ENCODE measurements at regions of chrX and their contacts with region 1.

Region 1: DNA sequence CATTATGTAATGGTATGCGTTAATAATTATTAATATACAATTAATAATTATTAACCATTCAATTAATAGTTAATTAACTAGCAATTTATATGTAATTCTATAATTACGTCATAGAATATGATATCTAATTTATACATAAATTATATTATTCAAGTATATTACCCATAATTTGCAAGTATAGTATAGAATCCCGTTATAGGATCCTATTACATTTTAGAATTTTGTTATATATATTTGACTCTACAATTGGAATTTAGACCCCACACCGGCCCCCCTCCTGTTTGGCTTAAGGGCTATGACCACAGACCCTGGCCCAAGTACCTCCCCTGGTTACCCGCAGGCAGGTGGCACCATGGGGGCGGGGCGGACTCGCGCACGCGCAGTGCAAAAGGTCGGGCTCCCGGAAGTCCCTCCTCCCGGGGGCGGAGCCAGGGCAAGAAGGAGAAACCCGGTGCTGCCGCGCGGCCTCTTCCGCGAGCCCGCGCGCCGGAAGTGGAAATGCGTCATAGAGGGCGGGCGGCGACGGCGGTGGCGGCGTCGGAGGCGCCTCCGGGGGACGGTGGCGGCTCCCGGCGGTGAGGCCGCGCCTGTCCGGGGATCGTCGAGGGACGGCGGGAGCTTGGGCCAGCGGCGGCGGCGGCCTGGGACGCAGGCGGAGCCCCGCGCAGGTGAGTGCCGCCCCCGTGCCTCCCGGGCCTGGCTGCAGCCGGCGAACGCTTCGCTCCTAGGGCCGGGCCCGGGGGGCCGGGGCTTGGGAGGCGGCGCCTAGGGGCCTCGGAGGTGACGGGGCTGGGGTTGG is at the start of gene AKAP17A:
- DNase-seq: peak; percentile 98
- H3K4me3 Mint-ChIP-seq: peak within 1 kb of the TSS; percentile 93
- H3K27ac Mint-ChIP-seq: peak within 1 kb of the TSS; percentile 92
- H3K4me1 Mint-ChIP-seq: peaks cover 24% of the 10 kb centered on the region
- H3K27me3 Mint-ChIP-seq: no peaks in the 10 kb centered on the region
- total RNA-seq, gene AKAP17A: 67.4 and 67.6 TPM in 2 replicates

Region 2: DNA sequence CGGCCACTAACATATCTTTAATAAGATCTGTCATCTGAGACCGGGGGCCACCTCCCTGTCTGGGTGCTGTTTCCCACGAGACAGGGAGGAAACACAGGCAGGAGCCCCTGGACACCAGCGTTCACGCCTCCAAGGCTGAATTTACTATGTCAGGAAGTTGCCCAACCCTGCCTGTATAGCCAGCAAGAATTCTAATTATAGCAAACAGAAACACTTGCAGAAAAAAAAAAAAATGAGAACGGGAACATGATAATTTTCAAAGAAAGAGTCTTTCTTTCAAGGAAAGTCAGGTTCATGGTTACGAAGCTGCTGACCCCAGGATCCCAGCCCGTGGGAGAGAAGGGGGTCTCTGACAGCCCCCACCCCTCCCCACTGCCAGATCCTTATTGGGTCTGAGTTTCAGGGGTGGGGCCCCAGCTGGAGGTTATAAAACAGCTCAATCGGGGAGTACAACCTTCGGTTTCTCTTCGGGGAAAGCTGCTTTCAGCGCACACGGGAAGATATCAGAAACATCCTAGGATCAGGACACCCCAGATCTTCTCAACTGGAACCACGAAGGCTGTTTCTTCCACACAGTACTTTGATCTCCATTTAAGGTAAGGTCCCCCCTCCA is 254.9 kb before region 1 on chrX and contains the start of gene IL3RA:
- intact Hi-C with region 1: loop called (anchors 10 kb)
- DNase-seq: peak; percentile 48
- H3K4me3 Mint-ChIP-seq: peak within 1 kb of the TSS; percentile 85
- H3K27ac Mint-ChIP-seq: peak within 1 kb of the TSS; percentile 83
- H3K4me1 Mint-ChIP-seq: peaks cover 26% of the 10 kb centered on the region
- H3K27me3 Mint-ChIP-seq: no peaks in the 10 kb centered on the region
- total RNA-seq, gene IL3RA: 6.8 and 7.4 TPM in 2 replicates

Region 3: GRCh38 chrX:1391707-1392375 is 199.5 kb before region 1 on chrX and contains the start of gene SLC25A6:
- intact Hi-C with region 1: loop called (anchors 5 kb)
- DNase-seq: peak; percentile 99
- H3K4me3 Mint-ChIP-seq: peak within 1 kb of the TSS; percentile 95
- H3K27ac Mint-ChIP-seq: peak within 1 kb of the TSS; percentile 95
- H3K4me1 Mint-ChIP-seq: peaks cover 26% of the 10 kb centered on the region
- H3K27me3 Mint-ChIP-seq: no peaks in the 10 kb centered on the region
- total RNA-seq, gene SLC25A6: 318 and 325 TPM in 2 replicates

Measured in activated T-helper 2 cell treated with anti-CD3 and anti-CD28 coated beads, Interferon-gamma antibody, Interleukin-2, Interleukin-4, amounts not matched to agents 10 μg/mL and 5 μg/mL and 100 μg/mL, durations not matched to agents 14 hours and 24 hours and 36 hours (primary cell).